WTC11 (cell line): ENCODE measurements at regions of chr19 and their contacts with region 1.

Region 1: DNA sequence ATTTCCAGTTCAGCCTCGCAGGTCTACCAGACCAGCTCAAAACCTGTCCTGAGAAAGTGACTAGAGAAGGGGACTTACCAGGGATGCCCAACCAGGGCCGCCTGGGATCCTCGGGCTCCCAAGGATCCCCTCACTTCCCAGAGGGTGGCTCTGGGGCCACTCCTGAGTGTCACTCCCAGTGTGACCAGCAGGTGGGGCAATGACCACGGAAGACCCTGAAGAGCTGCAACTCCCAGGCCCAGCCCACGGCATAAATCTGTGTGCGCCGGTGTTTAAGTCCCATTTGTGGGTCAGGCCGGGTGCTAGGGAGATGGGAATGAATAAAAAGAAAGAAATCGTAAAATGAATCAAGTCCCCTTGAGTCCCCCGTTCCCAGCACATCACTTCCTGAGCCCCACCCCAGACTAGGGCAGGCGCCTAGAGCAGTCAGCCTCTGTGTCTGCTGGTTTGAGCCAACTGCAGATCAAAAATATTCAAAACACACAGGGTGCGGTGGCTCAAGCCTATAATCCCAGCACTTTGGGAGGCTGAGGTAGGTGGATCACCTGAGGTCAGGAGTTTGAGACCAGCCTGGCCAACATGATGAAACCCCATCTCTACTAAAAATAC is 10.7 kb downstream of the PTGIR start:
- DNase-seq: peak; percentile 93
- ATAC-seq: peak; percentile 88
- H3K4me3 Mint-ChIP-seq: 0 out of 2 replicates have a peak overlapping the region, but pooled peaks have one; percentile 24
- H3K27ac Mint-ChIP-seq: no peak overlapping the region
- H3K4me1 Mint-ChIP-seq: peaks cover 9% of the 10 kb centered on the region
- H3K27me3 Mint-ChIP-seq: peaks cover 3% of the 10 kb centered on the region; the same call in 1 of the 2 replicates
- CTCF ChIP-seq: peak; percentile 88

Region 2: GRCh38 chr19:46537136-46538097 is 76.8 kb before region 1 on chr19:
- CTCF ChIA-PET with region 1: interaction called, 11 read pairs
- POLR2A ChIA-PET with region 1: no interaction called
- DNase-seq: peak; percentile 83
- ATAC-seq: peak; percentile 89
- H3K4me3 Mint-ChIP-seq: no peak overlapping the region
- H3K27ac Mint-ChIP-seq: no peak overlapping the region
- H3K4me1 Mint-ChIP-seq: 0 out of 2 replicates have a peak, but pooled peaks cover 2% of the 10 kb centered on the region
- H3K27me3 Mint-ChIP-seq: peaks cover 5% of the 10 kb centered on the region
- CTCF ChIP-seq: peak; percentile 92

Region 3: GRCh38 chr19:46624958-46625661 is 10.9 kb after region 1 on chr19 and contains the start of gene PTGIR:
- CTCF ChIA-PET with region 1: interaction called, 53 read pairs
- POLR2A ChIA-PET with region 1: no interaction called
- DNase-seq: no peak
- ATAC-seq: peak; percentile 53
- H3K4me3 Mint-ChIP-seq: no peak within 1 kb of the TSS
- H3K27ac Mint-ChIP-seq: no peak within 1 kb of the TSS
- H3K4me1 Mint-ChIP-seq: peaks cover 8% of the 10 kb centered on the region
- H3K27me3 Mint-ChIP-seq: no peaks in the 10 kb centered on the region; the same call in 1 of the 2 replicates
- CTCF ChIP-seq: no peak
- total RNA-seq, gene PTGIR: 0.24 TPM in 1 of 3 replicates, not detected in the others

Region 4: DNA sequence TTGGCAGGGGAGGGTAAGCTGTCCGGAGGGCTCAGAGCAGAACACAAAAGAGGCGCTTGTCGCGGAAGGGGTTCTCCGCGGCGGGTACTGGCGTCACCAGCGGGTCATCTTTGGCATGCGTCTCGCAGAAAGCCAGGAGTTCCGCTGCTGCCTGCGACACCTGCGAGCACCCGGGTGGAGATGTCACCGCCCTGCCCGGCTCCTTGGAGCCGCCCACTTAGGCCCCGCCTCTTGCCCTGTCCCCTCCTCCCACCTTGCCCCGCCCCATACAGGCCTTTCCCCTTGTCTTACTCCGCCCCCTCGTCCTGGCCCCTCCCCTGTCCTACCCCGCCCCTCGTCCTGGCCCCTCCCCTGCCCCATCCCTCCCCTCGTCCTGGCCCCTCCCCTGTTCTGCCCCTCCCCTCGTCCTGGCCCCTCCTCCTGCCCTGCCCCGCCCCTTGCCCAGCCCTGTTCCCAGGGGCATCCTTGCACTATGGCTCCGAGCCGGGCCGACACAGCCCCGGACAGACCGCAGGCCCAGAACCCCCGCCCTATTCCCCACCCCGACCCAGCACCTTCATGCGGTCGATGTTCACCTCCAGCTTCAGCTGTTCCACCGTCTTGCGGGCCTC is 19.9 kb after region 1 on chr19:
- CTCF ChIA-PET with region 1: interaction called, 53 read pairs
- POLR2A ChIA-PET with region 1: no interaction called
- DNase-seq: peak; percentile 98
- ATAC-seq: peak; percentile 83
- H3K4me3 Mint-ChIP-seq: peak overlapping the region; percentile 72
- H3K27ac Mint-ChIP-seq: no peak overlapping the region
- H3K4me1 Mint-ChIP-seq: peaks cover 27% of the 10 kb centered on the region
- H3K27me3 Mint-ChIP-seq: peaks cover 39% of the 10 kb centered on the region
- CTCF ChIP-seq: no peak

Region 5: GRCh38 chr19:46678110-46678732 is 64.0 kb after region 1 on chr19:
- CTCF ChIA-PET with region 1: interaction called, 11 read pairs
- POLR2A ChIA-PET with region 1: no interaction called
- DNase-seq: peak; percentile 90
- ATAC-seq: peak; percentile 87
- H3K4me3 Mint-ChIP-seq: no peak overlapping the region
- H3K27ac Mint-ChIP-seq: peak overlapping the region; percentile 85
- H3K4me1 Mint-ChIP-seq: 0 out of 2 replicates have a peak, but pooled peaks cover 8% of the 10 kb centered on the region
- H3K27me3 Mint-ChIP-seq: no peaks in the 10 kb centered on the region
- CTCF ChIP-seq: no peak

Region 6: DNA sequence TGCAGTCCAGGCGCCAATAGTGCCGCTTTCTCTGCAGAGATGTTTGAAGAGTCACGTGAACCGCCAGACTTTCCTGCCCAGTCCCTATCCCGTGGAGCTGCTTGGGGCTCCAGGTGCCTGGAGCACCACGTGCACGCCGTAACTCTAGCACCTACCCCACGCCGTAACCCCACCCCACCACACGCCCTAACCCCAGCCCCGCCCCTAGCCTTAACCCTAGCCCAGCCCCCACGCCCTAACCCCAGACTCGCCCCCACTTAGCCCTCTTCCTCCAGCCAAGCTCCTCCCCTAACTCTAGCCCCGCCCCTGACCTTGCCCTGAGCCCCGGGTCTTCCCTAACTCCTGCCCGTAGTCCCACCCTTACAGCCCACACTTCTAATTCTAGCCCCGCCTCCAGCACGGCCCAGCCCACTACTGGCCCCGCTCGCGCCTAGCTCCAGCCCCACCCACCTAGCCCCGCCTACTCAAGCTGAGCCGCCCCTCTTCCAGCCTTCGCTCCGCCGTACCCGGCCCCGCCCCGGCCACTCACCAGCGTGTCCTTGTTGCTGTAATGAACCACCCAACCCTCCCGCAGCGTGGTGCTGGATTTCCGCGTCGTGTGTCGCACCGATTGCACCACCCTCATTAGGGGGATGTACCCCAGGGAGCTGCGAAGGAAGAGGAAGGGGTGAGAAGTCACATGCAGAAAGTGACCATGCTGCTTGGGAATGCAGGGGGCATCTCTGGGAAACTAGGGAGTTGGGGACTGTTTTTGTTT is 83.2 kb after region 1 on chr19:
- CTCF ChIA-PET with region 1: interaction called, 15 read pairs
- POLR2A ChIA-PET with region 1: no interaction called
- DNase-seq: peak; percentile 100
- ATAC-seq: peak; percentile 99
- H3K4me3 Mint-ChIP-seq: peak overlapping the region; percentile 55
- H3K27ac Mint-ChIP-seq: peak overlapping the region; percentile 97
- H3K4me1 Mint-ChIP-seq: peaks cover 11% of the 10 kb centered on the region
- H3K27me3 Mint-ChIP-seq: no peaks in the 10 kb centered on the region
- CTCF ChIP-seq: no peak